Caco-2 (cell line): ENCODE measurements at regions of chr6 and their contacts with region 1.

Region 1: GRCh38 chr6:114007451-114007953 is 36.6 kb upstream of the HDAC2 start:
- DNase-seq: no peak
- H3K4me3 ChIP-seq: no peak overlapping the region
- H3K4me3 Mint-ChIP-seq: no peak overlapping the region
- H3K27ac Mint-ChIP-seq: no peak overlapping the region
- H3K4me1 ChIP-seq: peaks cover 26% of the 10 kb centered on the region
- H3K4me1 Mint-ChIP-seq: peaks cover 6% of the 10 kb centered on the region
- H3K27me3 ChIP-seq: no peaks in the 10 kb centered on the region
- H3K27me3 Mint-ChIP-seq: no peaks in the 10 kb centered on the region
- CTCF ChIP-seq: no peak

Region 2: GRCh38 chr6:113970805-113971676 is 36.5 kb before region 1 on chr6 and contains the start of gene HDAC2:
- CTCF ChIA-PET with region 1: no interaction called
- POLR2A ChIA-PET with region 1: no interaction called
- intact Hi-C with region 1: loop called (anchors 1 kb)
- DNase-seq: peak; percentile 94
- H3K4me3 ChIP-seq: peak within 1 kb of the TSS; percentile 97
- H3K4me3 Mint-ChIP-seq: peak within 1 kb of the TSS; percentile 98
- H3K27ac Mint-ChIP-seq: peak within 1 kb of the TSS; percentile 99
- H3K4me1 ChIP-seq: peaks cover 8% of the 10 kb centered on the region; the same call in 1 of the 2 replicates
- H3K4me1 Mint-ChIP-seq: peaks cover 28% of the 10 kb centered on the region
- H3K27me3 ChIP-seq: no peaks in the 10 kb centered on the region
- H3K27me3 Mint-ChIP-seq: no peaks in the 10 kb centered on the region
- CTCF ChIP-seq: no peak
- total RNA-seq, gene HDAC2: 197 and 201 TPM in 2 replicates

Region 3: GRCh38 chr6:114030767-114031166 is 23.3 kb after region 1 on chr6:
- CTCF ChIA-PET with region 1: no interaction called
- POLR2A ChIA-PET with region 1: no interaction called
- intact Hi-C with region 1: loop called (anchors 1 kb)
- DNase-seq: peak; percentile 71 to 73
- H3K4me3 ChIP-seq: no peak overlapping the region
- H3K4me3 Mint-ChIP-seq: peak overlapping the region; percentile 18
- H3K27ac Mint-ChIP-seq: peak overlapping the region; percentile 55
- H3K4me1 ChIP-seq: peaks cover 43% of the 10 kb centered on the region
- H3K4me1 Mint-ChIP-seq: peaks cover 53% of the 10 kb centered on the region
- H3K27me3 ChIP-seq: no peaks in the 10 kb centered on the region
- H3K27me3 Mint-ChIP-seq: no peaks in the 10 kb centered on the region
- CTCF ChIP-seq: no peak

Region 4: DNA sequence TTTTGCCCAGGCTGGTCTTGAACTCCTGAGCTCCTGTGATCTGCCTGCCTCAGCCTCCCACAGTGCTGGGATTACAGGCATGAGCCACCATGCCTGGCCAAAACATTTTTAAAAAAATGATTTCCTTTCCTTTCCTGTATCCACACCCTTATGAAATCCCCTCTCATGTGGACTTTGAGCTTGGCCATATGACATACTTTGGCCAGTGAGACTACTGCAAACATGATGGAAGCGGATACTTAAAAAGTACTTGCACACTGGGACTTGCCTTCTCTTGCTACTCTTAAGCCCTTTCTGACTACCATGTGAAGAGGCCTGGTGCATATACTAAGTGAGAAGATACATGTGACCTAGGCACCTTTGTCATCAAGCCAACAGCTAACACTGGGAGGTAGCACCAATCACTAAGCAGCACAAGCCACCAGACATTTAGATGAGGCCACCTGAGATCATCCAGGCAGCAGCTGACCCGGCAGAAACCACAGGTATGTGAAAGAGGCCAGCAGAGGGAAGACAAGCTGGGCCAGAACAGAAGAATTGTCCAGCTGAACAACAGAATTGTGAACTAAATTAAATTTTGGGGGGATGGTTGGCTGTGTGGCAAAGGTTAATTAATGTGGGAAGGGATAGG is 42.0 kb after region 1 on chr6:
- CTCF ChIA-PET with region 1: no interaction called
- POLR2A ChIA-PET with region 1: no interaction called
- intact Hi-C with region 1: loop called (anchors 1 kb)
- DNase-seq: peak; percentile 47 to 53
- H3K4me3 ChIP-seq: no peak overlapping the region
- H3K4me3 Mint-ChIP-seq: peak overlapping the region; percentile 3
- H3K27ac Mint-ChIP-seq: peak overlapping the region; percentile 17
- H3K4me1 ChIP-seq: peaks cover 14% of the 10 kb centered on the region
- H3K4me1 Mint-ChIP-seq: peaks cover 20% of the 10 kb centered on the region
- H3K27me3 ChIP-seq: no peaks in the 10 kb centered on the region
- H3K27me3 Mint-ChIP-seq: no peaks in the 10 kb centered on the region
- CTCF ChIP-seq: no peak